GM12878 (cell line): ENCODE measurements at regions of chr1 and their contacts with region 1.

Region 1: GRCh38 chr1:204806943-204807687 is 63.5 kb upstream of the NFASC start:
- DNase-seq: peak; percentile 43
- ATAC-seq: peak; percentile 98
- H3K4me3 ChIP-seq: peak overlapping the region; percentile 49; the same call in 1 of the 2 replicates
- H3K27ac ChIP-seq: no peak overlapping the region
- H3K4me1 ChIP-seq: no peaks in the 10 kb centered on the region
- H3K27me3 ChIP-seq: peaks cover 0 to 6% of the 10 kb centered on the region in 2 experiments; a peak in 2 of 4 replicates
- CTCF ChIP-seq: peak; percentile 82 to 98 (median 93)
- EP300 ChIP-seq: no peak
- POLR2A ChIP-seq: no peak
- RAD21 ChIP-seq: peak; percentile 82

Region 2: GRCh38 chr1:204084247-204084772 is 722.8 kb before region 1 on chr1:
- CTCF ChIA-PET with region 1: no interaction called
- POLR2A ChIA-PET with region 1: no interaction called
- RAD21 ChIA-PET with region 1: no interaction called
- SMC1A ChIA-PET with region 1: no interaction called
- in situ Hi-C with region 1: no loop called
- intact Hi-C with region 1: no loop called
- DNase-seq: no peak
- ATAC-seq: peak; percentile 31; the same call in 2 of the 3 replicates
- H3K4me3 ChIP-seq: no peak overlapping the region
- H3K27ac ChIP-seq: no peak overlapping the region
- H3K4me1 ChIP-seq: no peaks in the 10 kb centered on the region
- H3K27me3 ChIP-seq: no peaks in the 10 kb centered on the region; a peak in 1 of 4 replicates
- CTCF ChIP-seq: no peak
- EP300 ChIP-seq: no peak
- POLR2A ChIP-seq: no peak
- RAD21 ChIP-seq: no peak

Region 3: DNA sequence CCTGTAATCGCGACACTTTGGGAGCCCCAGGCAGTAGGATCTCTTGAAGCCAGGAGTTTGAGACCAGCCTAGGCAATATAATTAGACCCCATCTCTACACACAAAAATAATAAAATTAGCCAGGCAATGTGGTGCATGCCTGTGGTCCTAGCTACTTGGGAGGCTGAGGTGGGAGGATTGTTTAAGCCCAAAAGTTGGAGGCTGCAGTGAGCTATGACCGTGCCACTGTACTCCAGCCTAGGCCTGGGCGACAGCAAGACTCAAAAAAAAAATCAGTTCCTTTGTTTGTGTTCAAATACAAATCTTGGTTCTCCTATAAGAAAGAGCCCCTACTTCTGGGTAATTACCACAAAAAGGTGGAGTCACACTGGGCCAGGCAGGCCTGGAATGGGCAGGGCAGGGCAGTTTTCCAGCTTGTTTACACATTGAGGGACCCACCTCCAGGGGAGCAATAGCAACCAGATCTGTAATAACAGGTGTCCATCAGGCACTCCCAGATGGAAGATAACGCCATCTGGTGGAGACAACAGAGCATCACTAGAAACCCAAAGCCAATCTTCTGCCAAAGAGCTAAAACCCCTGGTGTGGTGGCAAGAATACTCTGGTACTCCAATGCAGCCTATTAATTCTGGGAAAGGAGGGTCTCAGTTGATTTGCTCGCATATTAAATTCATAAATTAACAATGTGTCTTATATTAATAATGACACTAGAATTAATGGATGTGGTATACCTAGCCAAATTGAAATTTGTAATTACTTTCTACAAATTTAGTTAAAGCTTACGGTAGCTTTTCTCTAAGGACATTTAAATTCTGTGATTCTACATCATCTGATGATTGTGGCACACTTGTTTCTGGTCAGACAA is 408.7 kb before region 1 on chr1:
- CTCF ChIA-PET with region 1: interaction called, 11 read pairs
- POLR2A ChIA-PET with region 1: no interaction called
- RAD21 ChIA-PET with region 1: interaction called, 5 read pairs
- SMC1A ChIA-PET with region 1: interaction called, 4 read pairs
- in situ Hi-C with region 1: no loop called
- intact Hi-C with region 1: no loop called
- DNase-seq: no peak
- ATAC-seq: peak; percentile 94
- H3K4me3 ChIP-seq: no peak overlapping the region
- H3K27ac ChIP-seq: no peak overlapping the region
- H3K4me1 ChIP-seq: no peaks in the 10 kb centered on the region
- H3K27me3 ChIP-seq: no peaks in the 10 kb centered on the region
- CTCF ChIP-seq: peak; percentile 83 to 91 (median 86)
- EP300 ChIP-seq: no peak
- POLR2A ChIP-seq: no peak
- RAD21 ChIP-seq: peak; percentile 62

Region 4: GRCh38 chr1:204506961-204507387 is 300.1 kb before region 1 on chr1:
- CTCF ChIA-PET with region 1: interaction called, 28 read pairs
- POLR2A ChIA-PET with region 1: no interaction called
- RAD21 ChIA-PET with region 1: interaction called, 42 read pairs
- SMC1A ChIA-PET with region 1: interaction called, 19 read pairs
- in situ Hi-C with region 1: no loop called
- intact Hi-C with region 1: loop called (anchors 2 kb)
- DNase-seq: peak; percentile 97
- ATAC-seq: peak; percentile 83
- H3K4me3 ChIP-seq: peak overlapping the region; percentile 77
- H3K27ac ChIP-seq: peak overlapping the region; percentile 59
- H3K4me1 ChIP-seq: peaks cover 4% of the 10 kb centered on the region
- H3K27me3 ChIP-seq: no peaks in the 10 kb centered on the region
- CTCF ChIP-seq: no peak
- EP300 ChIP-seq: peak in 1 of 2 experiments; percentile 29; a peak in 1 of 4 replicates
- POLR2A ChIP-seq: peak; percentile 42; the same call in 1 of the 2 replicates
- RAD21 ChIP-seq: no peak

Region 5: DNA sequence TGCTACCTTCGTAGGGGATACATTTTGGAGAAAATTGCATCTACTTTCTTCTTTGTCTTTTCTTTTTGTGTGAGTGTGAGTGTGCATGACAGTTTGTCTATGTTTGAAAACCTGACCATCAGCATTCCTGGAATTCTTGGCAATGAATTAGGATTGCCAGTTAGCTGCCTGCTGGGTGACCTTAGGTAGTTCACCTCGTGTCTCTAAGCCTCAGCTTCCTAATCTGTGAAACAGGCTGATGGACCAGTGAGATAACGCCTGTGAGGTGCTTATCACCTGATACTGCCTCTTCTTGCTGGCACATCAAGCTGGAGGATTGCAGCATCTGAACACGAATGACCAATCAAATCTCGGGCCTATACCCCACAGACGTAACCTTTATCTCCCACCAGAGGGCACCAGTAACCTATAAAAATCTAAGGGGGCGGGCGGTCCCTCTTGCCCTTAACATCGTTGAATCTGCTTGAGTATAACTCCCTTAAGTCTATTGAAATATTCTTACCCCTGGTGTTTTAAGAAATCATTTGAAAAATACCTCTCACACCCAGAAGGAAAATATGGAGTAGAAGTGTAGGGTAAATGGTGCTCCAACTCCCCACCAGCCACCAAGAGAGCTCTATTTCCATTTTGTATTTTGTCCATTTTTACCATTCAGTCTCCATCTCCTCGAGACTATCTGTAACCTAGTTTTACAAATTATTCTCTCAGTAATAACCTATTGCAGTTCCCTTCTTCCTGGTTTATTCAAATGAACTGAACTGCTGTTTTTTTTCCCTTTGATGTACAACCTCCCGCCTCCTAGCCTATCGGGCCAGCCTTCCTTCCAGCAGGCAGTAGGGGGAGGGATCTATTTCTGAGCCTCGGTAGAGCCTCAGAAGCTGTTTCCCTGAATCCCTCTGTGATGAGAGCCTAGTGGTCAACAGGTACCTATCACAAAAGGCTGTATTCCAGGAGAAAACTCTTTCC is 241.2 kb before region 1 on chr1:
- CTCF ChIA-PET with region 1: interaction called, 279 read pairs
- POLR2A ChIA-PET with region 1: interaction called, 4 read pairs
- RAD21 ChIA-PET with region 1: interaction called, 81 read pairs
- SMC1A ChIA-PET with region 1: interaction called, 76 read pairs
- in situ Hi-C with region 1: loop called (anchors 5 kb)
- intact Hi-C with region 1: loop called (anchors 1 kb)
- DNase-seq: no peak
- ATAC-seq: peak; percentile 87
- H3K4me3 ChIP-seq: no peak overlapping the region
- H3K27ac ChIP-seq: peak overlapping the region; percentile 45
- H3K4me1 ChIP-seq: peaks cover 24% of the 10 kb centered on the region
- H3K27me3 ChIP-seq: no peaks in the 10 kb centered on the region
- CTCF ChIP-seq: peak; percentile 58 to 78 (median 72)
- EP300 ChIP-seq: no peak
- POLR2A ChIP-seq: no peak
- RAD21 ChIP-seq: peak; percentile 78

Region 6: GRCh38 chr1:204640578-204640977 is 166.5 kb before region 1 on chr1:
- CTCF ChIA-PET with region 1: interaction called, 12 read pairs
- POLR2A ChIA-PET with region 1: no interaction called
- RAD21 ChIA-PET with region 1: interaction called, 4 read pairs
- SMC1A ChIA-PET with region 1: interaction called, 4 read pairs
- in situ Hi-C with region 1: no loop called
- intact Hi-C with region 1: no loop called
- DNase-seq: no peak
- ATAC-seq: no peak
- H3K4me3 ChIP-seq: no peak overlapping the region
- H3K27ac ChIP-seq: no peak overlapping the region
- H3K4me1 ChIP-seq: no peaks in the 10 kb centered on the region
- H3K27me3 ChIP-seq: peaks cover 0 to 6% of the 10 kb centered on the region in 2 experiments; a peak in 2 of 4 replicates
- CTCF ChIP-seq: no peak
- EP300 ChIP-seq: no peak
- POLR2A ChIP-seq: no peak
- RAD21 ChIP-seq: no peak

Region 7: GRCh38 chr1:204763706-204764427 is 43.2 kb before region 1 on chr1:
- CTCF ChIA-PET with region 1: interaction called, 74 read pairs
- POLR2A ChIA-PET with region 1: interaction called, 6 read pairs
- RAD21 ChIA-PET with region 1: interaction called, 40 read pairs
- SMC1A ChIA-PET with region 1: interaction called, 36 read pairs
- in situ Hi-C with region 1: no loop called
- intact Hi-C with region 1: no loop called
- DNase-seq: peak; percentile 40
- ATAC-seq: peak; percentile 99
- H3K4me3 ChIP-seq: no peak overlapping the region
- H3K27ac ChIP-seq: no peak overlapping the region
- H3K4me1 ChIP-seq: 0 out of 2 replicates have a peak, but pooled peaks cover 4% of the 10 kb centered on the region
- H3K27me3 ChIP-seq: peaks cover 0 to 1% of the 10 kb centered on the region in 2 experiments; a peak in 1 of 4 replicates
- CTCF ChIP-seq: peak; percentile 88 to 93 (median 92)
- EP300 ChIP-seq: no peak
- POLR2A ChIP-seq: no peak
- RAD21 ChIP-seq: peak; percentile 75

Region 8: GRCh38 chr1:204828338-204828850 is 21.3 kb after region 1 on chr1:
- CTCF ChIA-PET with region 1: interaction called, 79 read pairs
- POLR2A ChIA-PET with region 1: no interaction called
- RAD21 ChIA-PET with region 1: no interaction called
- SMC1A ChIA-PET with region 1: no interaction called
- in situ Hi-C with region 1: no loop called
- intact Hi-C with region 1: no loop called
- DNase-seq: no peak
- ATAC-seq: peak; percentile 61
- H3K4me3 ChIP-seq: no peak overlapping the region
- H3K27ac ChIP-seq: no peak overlapping the region
- H3K4me1 ChIP-seq: no peaks in the 10 kb centered on the region
- H3K27me3 ChIP-seq: peaks cover 9 to 12% of the 10 kb centered on the region in 2 experiments
- CTCF ChIP-seq: no peak
- EP300 ChIP-seq: no peak
- POLR2A ChIP-seq: no peak
- RAD21 ChIP-seq: no peak